Posterior vena cava (tissue), 2 donors: ENCODE measurements at regions of chr14 and their contacts with region 1.

Region 1: GRCh38 chr14:64117671-64118402 is 176.3 kb downstream of the ESR2 start:
- DNase-seq: no peak

Region 2: GRCh38 chr14:64098120-64098519 is 19.7 kb before region 1 on chr14:
- intact Hi-C with region 1: loop called in 1 of 2 experiments (anchors 1 kb)
- DNase-seq: no peak

Region 3: GRCh38 chr14:64910847-64911495 is 793.1 kb after region 1 on chr14:
- intact Hi-C with region 1: no loop called
- DNase-seq: no peak